Vagina (tissue), 2 donors: ENCODE measurements at regions of chr11 and their contacts with region 1.

Region 1: DNA sequence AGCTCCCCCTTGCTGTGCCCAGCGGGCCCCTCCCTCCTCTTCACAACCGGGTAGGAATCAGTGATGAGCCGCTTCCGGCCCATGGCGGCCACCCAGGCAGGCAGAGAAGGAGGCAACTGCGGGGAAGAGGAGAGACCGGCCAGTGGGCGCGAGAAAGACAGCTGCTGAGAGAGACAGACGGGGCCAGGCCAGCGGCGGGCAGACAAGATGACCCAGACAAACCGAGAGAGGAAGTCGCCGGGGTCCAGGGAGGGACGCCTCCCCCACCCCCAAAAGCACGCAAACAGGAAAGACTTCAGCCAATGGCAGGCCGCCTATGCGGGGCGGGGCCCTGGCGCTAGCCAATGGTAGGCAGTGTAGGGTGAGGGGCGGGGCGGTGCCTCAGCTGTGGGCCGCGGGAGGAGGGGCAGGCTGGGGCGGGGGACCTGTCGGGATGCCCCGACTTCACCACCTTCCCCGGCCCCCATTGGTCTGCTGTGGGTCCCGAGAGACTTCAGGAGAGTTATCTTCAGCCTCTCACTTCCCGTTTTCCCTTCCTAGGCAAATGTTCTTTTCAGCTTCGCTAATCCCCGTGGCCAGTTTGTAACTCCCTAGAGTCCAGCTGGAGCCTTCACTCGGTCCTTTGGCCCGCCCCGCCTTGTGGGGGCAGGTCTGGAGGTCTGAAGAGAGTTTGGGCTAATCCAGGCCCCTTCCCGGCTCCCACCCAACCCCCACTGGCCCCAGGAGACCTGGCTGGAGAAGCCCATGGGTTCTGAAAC is at the start of gene POLD4:
- DNase-seq: peak in 1 of 2 donors; percentile 99
- H3K4me3 ChIP-seq: peak within 1 kb of the TSS; percentile 55 to 70
- H3K27ac ChIP-seq: peak within 1 kb of the TSS; percentile 99
- H3K4me1 ChIP-seq: peaks cover 83% of the 10 kb centered on the region
- H3K27me3 ChIP-seq: no peaks in the 10 kb centered on the region
- CTCF ChIP-seq: no peak
- POLR2A ChIP-seq: peak in 1 of 2 donors; percentile 91
- total RNA-seq, gene POLD4: 80.0 TPM

Region 2: DNA sequence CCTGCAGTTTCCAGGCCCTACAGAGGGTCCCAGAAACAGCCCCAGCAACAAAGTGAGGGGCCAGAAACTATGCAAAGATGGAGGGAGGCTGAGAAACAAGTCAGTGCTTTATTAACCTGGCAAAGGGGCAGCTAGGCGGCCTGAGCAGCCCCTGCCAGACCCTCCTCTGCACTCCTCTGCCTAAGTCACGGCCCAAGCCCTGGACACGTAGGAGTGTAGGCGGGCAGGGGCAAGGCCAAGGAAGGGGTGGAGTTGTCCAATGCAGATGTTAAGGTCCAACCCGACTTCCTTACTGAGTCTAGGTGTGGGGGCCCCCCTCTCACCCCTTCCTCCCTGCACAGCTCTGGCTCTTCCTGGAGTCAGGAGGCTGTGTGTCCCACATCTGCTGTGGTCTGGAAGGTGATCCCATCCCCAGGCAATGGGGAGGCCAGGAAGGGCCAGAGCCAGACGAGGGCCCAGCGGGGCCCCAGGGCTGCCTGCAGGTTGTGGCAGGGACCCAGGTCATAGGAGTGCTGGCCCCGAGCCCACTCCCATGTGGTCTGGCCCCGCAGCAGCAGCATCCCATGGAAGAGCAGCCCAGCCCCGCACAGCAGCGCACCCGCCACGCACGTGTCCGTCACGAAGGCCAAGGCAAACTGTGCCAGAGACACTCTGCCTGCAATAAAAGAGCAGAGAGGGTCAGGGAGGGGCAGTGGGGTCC is 814.2 kb before region 1 on chr11:
- intact Hi-C with region 1: no loop called
- DNase-seq: no peak
- H3K4me3 ChIP-seq: no peak overlapping the region
- H3K27ac ChIP-seq: no peak overlapping the region
- H3K4me1 ChIP-seq: peaks cover 21% of the 10 kb centered on the region
- H3K27me3 ChIP-seq: no peaks in the 10 kb centered on the region
- CTCF ChIP-seq: no peak
- POLR2A ChIP-seq: no peak

Region 3: DNA sequence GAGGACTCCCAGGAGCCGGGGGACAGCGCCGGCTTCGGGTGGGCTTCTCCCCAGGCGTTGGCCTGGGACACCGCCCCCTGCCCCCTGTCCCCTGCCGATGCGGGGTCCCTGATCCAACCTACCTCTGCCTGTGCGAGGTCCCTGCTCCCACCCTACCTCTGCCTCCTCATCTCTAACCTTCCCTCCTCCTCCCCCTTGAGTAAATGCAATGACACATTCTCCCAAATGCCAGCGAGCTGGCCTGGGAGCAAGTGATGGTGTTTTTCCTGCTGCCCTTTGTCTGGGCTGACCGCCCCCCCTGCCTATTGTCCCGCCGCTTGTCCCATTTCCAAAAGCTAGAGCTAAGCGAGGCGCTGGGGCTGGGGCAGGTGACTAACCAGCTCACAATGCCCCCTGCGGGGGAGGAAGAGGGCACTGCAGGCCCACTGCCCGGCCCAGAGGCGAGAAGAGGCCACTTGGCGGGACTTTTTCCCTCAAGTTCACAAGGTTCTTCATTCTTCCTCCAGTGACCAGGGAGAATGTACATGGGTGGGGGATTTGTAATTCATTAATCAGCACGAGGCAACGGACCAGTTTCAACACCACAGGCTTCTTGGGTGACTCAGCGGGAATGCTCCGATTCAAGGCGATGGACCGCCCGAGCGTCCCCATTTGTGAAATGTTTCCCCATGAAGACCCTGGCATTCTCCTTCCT is 20.6 kb after region 1 on chr11:
- intact Hi-C with region 1: loop called (anchors 1 kb)
- DNase-seq: no peak
- H3K4me3 ChIP-seq: peak overlapping the region; percentile 63 to 81
- H3K27ac ChIP-seq: peak overlapping the region; percentile 98
- H3K4me1 ChIP-seq: peaks cover 67% of the 10 kb centered on the region
- H3K27me3 ChIP-seq: no peaks in the 10 kb centered on the region
- CTCF ChIP-seq: no peak
- POLR2A ChIP-seq: no peak

Region 4: DNA sequence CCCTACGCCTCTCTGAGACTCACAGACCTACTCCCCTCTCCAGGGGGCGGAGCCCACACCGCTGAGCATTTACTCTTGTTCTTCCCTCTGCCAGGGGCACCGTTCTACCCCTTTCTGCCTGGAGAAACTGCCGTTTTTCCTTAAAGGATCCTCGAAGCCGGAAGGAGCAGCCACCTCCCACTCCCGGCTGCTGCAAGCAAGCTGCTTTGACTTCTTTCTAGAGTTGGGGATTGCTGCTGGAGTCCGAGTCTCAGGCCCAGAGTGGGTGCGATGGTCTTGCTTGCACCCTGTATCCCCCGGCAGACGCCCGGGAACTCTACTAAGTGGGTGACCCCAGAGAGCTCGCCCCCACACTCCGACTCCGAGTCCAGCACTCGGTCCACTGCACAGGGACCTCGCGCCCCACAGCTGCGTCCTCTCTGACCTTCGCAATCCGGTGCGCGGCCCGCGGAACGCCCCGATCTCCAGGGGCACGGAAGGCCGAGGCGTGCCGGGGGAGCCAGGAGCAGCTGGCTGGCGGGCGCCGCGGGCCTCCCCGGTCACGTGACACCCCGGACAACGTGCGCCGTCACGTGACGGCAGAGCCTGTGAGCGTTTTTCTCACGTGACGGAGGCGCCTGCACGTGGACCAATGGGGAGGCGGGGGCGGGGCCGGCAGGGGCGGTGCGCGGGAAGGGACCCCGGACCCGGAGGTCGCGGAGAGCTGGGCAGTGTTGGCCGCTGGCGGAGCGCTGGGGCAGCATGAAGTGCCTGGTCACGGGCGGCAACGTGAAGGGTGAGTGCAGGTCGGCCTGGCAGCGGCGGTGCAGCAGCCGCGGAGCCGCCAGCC is 38.0 kb after region 1 on chr11 and contains the start of gene RAD9A:
- intact Hi-C with region 1: no loop called
- DNase-seq: peak in 1 of 2 donors; percentile 96
- H3K4me3 ChIP-seq: peak within 1 kb of the TSS; percentile 85 to 93
- H3K27ac ChIP-seq: peak within 1 kb of the TSS; percentile 80
- H3K4me1 ChIP-seq: peaks cover 20% of the 10 kb centered on the region
- H3K27me3 ChIP-seq: no peaks in the 10 kb centered on the region
- CTCF ChIP-seq: no peak
- POLR2A ChIP-seq: peak in 1 of 2 donors; percentile 21
- total RNA-seq, gene RAD9A: 20.6 TPM

Region 5: GRCh38 chr11:67534070-67534679 is 180.7 kb after region 1 on chr11:
- intact Hi-C with region 1: no loop called
- DNase-seq: no peak
- H3K4me3 ChIP-seq: no peak overlapping the region
- H3K27ac ChIP-seq: no peak overlapping the region
- H3K4me1 ChIP-seq: no peaks in the 10 kb centered on the region
- H3K27me3 ChIP-seq: no peaks in the 10 kb centered on the region
- CTCF ChIP-seq: no peak
- POLR2A ChIP-seq: no peak